HepG2 (cell line): ENCODE measurements at regions of chr18 and their contacts with region 1.

Region 1: DNA sequence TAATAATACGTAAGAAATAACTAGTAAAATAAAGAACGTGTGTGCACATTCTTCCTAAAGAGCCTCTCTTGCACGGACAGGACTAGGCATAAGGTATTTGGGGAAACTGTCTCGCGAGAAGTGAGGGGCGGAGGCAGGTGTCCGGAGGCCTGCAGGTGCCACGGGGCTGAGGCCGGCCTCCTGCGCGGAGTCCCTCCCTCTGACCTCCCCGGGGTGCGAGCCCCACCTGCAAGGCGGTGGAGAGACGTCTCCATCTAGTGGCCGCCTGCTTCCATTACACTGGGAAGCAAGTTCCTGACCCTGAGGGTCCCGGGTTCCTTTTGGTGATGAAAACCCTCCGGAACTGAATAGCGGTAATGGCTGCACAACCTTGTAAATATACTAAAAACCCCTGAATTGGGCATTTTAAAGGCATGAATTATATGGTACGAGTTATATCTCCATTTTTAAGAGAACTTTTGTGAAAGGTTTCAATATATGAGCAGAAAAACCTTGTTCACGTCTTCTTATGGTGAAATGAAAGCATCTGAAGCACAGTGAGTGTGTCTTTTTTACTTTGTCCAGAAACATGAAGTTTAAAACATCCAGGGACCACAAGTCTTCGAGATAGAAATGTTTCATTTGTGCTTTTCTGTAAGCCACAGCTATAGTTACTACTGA is 35.5 kb upstream of the CTDP1 start:
- DNase-seq: peak; percentile 50
- ATAC-seq: peak; percentile 92
- H3K4me3 ChIP-seq: no peak overlapping the region
- H3K27ac ChIP-seq: no peak overlapping the region
- H3K4me1 ChIP-seq: no peaks in the 10 kb centered on the region
- H3K27me3 ChIP-seq: peaks cover 2 to 39% of the 10 kb centered on the region in 2 experiments; a peak in 4 of 5 replicates
- CTCF ChIP-seq: peak; percentile 94
- EP300 ChIP-seq: no peak
- POLR2A ChIP-seq: no peak
- RAD21 ChIP-seq: peak; percentile 93

Region 2: GRCh38 chr18:79353267-79353666 is 290.9 kb before region 1 on chr18:
- CTCF ChIA-PET with region 1: no interaction called
- POLR2A ChIA-PET with region 1: no interaction called
- in situ Hi-C with region 1: no loop called
- intact Hi-C with region 1: loop called (anchors 10 kb)
- DNase-seq: peak; percentile 10
- ATAC-seq: peak; percentile 93
- H3K4me3 ChIP-seq: no peak overlapping the region
- H3K27ac ChIP-seq: no peak overlapping the region
- H3K4me1 ChIP-seq: no peaks in the 10 kb centered on the region
- H3K27me3 ChIP-seq: no peaks in the 10 kb centered on the region
- CTCF ChIP-seq: peak; percentile 60
- EP300 ChIP-seq: no peak
- POLR2A ChIP-seq: no peak
- RAD21 ChIP-seq: no peak

Region 3: GRCh38 chr18:79378542-79379250 is 265.4 kb before region 1 on chr18:
- CTCF ChIA-PET with region 1: interaction called, 18 read pairs
- POLR2A ChIA-PET with region 1: no interaction called
- in situ Hi-C with region 1: loop called (anchors 5 kb)
- intact Hi-C with region 1: loop called (anchors 2 kb)
- DNase-seq: no peak
- ATAC-seq: no peak
- H3K4me3 ChIP-seq: no peak overlapping the region
- H3K27ac ChIP-seq: no peak overlapping the region
- H3K4me1 ChIP-seq: no peaks in the 10 kb centered on the region
- H3K27me3 ChIP-seq: peaks cover 0 to 7% of the 10 kb centered on the region in 2 experiments; a peak in 2 of 5 replicates
- CTCF ChIP-seq: peak; percentile 52
- EP300 ChIP-seq: no peak
- POLR2A ChIP-seq: no peak
- RAD21 ChIP-seq: no peak

Region 4: DNA sequence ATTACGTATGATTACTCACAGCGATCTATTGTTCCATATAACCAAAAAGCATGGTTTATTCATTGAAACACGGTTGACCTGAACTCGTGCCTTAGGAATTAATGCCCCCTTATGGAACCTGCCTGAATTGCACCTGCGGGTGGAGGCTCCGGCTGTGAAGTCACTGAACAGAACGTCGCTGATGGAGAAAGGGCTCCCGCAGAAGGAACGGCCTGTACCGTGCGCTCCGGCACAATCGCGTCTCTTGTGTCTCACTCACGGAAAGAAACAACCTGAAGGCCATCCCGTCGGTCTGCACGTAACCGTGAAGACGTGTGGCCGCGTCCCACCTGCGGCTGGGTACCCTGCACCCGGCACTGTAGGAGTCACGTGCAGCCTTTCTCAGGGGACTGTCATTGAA is 115.3 kb before region 1 on chr18:
- CTCF ChIA-PET with region 1: no interaction called
- POLR2A ChIA-PET with region 1: no interaction called
- in situ Hi-C with region 1: no loop called
- intact Hi-C with region 1: loop called (anchors 1 kb)
- DNase-seq: peak; percentile 36
- ATAC-seq: peak; percentile 84
- H3K4me3 ChIP-seq: no peak overlapping the region
- H3K27ac ChIP-seq: no peak overlapping the region
- H3K4me1 ChIP-seq: no peaks in the 10 kb centered on the region
- H3K27me3 ChIP-seq: peaks cover 9 to 76% of the 10 kb centered on the region in 2 experiments
- CTCF ChIP-seq: peak; percentile 87
- EP300 ChIP-seq: no peak
- POLR2A ChIP-seq: no peak
- RAD21 ChIP-seq: peak; percentile 47; the same call in 1 of the 2 replicates